ENCODE measurements at regions of chr16 and their contacts with region 1.

Region 1: DNA sequence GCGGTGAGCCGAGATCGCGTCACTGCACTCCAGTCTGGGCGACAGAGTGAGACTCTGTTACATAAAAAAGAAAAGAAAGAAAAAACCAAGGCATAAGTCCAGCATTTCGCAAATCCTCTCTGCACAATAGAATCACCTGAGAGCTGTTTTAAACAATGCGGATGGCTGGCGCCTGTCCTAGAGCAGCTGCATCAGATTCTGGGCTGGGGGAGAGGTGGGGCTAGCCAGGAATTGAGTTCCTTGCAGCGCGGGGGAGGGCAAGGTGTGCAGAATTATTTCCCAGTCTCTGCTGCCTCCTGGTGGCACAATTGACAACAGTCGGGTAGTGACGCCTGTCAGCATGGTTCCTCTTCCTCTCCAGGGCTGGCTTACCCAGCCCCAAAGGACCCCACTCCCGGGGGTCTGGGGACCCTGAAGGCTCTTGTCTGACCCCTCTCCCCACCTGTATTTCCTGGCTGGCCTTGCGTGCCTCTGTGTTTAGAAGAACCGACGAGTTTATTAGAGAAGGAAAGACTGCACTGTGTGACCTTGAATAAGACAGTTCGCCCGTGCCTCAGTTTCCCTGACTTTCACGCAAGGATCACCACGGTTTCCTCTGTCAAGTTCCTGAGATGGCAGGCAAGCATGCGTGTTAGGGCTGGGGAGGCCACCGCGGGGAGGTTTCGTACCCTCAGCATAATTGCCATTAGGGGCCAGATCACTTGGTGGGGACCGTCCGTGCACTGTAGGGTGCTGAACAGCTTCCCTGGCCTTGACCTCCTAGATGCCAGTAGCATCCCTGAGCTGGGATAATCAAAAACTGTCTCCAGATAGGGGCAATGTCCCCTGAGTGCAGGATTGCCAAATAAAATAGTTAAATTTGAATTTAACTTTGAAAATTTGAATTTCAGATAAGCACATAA is 41.0 kb upstream of the PLCG2 start:
- DNase-seq: peak; percentile 79 to 83 (median 82)
- ATAC-seq: peak; percentile 89 to 96 (median 93)
- H3K4me3 ChIP-seq: peak overlapping the region in 10 of 12 donors; percentile 2 to 44 (median 29)
- H3K27ac ChIP-seq: peak overlapping the region in 5 of 12 donors; percentile 20 to 52 (median 33)
- H3K4me1 ChIP-seq: peaks cover 0 to 14% (median 4%) of the 10 kb centered on the region in 12 donors
- H3K27me3 ChIP-seq: peaks cover 0 to 2% (median 0%) of the 10 kb centered on the region in 9 donors
- CTCF ChIP-seq: peak; percentile 75 to 91 (median 82)
- POLR2A ChIP-seq: no peak

Region 2: DNA sequence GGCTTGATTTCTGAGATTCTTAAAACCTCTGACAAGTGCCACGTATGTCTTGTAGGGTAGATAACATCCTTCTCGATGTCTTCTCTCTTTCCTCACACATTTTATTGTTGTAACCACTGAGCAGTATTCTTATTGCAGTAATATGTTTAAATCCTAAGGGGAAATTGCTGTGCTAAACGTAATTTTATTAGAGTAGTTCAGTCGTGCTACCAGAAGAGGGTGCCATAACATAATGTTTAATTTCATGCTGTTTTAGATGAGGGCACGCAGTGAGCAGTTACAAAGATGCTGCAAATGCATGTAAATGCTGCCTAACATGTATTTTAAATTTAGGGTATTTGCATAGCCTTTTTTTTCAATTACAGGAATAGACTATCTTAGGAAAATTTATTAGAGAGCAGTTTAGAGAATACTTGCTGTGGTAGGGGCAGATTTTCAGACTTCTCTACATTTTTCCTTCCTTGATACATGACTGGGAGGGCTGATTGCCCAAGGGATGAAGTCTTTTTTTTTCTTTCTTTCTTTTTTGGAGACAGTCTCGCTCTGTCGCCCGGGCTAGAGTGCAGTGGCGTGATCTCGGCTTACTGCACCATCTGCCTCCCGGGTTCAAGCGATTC is 371.7 kb before region 1 on chr16:
- intact Hi-C with region 1: loop called in 2 of 10 experiments (anchors 5 kb)
- DNase-seq: no peak
- ATAC-seq: peak in 3 of 4 donors; percentile 60 to 74 (median 61)
- H3K4me3 ChIP-seq: no peak overlapping the region
- H3K27ac ChIP-seq: no peak overlapping the region
- H3K4me1 ChIP-seq: peaks cover 0 to 25% (median 6%) of the 10 kb centered on the region in 12 donors
- H3K27me3 ChIP-seq: no peaks in the 10 kb centered on the region
- CTCF ChIP-seq: peak; percentile 49 to 76 (median 62)
- POLR2A ChIP-seq: no peak

Region 3: DNA sequence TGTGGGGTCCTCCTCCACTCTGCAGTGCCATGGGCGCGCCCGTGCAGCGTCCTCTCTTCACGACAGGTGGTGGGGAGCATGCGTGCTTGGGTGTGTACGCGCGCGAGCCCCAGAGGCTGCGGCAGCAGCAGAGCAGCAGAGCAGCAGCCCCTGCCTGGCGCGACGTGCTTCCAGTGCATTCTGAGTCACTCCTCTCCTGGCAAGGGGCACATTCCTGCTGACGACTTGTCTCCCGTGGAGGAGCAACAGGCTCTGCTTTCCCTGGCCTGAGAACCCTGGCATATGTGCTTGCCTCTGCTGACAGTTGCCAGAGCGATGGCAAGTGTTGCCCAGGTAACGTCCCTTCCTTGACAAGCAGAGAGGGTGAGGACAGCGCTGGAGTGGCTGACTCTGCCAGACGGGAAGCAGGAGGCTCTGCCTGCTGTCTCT is 92.9 kb before region 1 on chr16:
- intact Hi-C with region 1: no loop called
- DNase-seq: peak; percentile 35 to 93 (median 75)
- ATAC-seq: peak; percentile 70 to 96 (median 92)
- H3K4me3 ChIP-seq: peak overlapping the region in 5 of 12 donors; percentile 0 to 26 (median 12)
- H3K27ac ChIP-seq: peak overlapping the region in 1 of 12 donors; percentile 71
- H3K4me1 ChIP-seq: peaks cover 0 to 14% (median 5%) of the 10 kb centered on the region in 12 donors
- H3K27me3 ChIP-seq: no peaks in the 10 kb centered on the region
- CTCF ChIP-seq: no peak
- POLR2A ChIP-seq: no peak

Measured in heart left ventricle (tissue), 16 donors.